ENCODE measurements at regions of chr5 and their contacts with region 1.

Region 1: GRCh38 chr5:142881076-142881783 is 111.1 kb downstream of the ARHGAP26 start:
- DNase-seq: no peak
- H3K4me3 ChIP-seq: no peak overlapping the region
- H3K27ac ChIP-seq: no peak overlapping the region
- H3K4me1 ChIP-seq: peaks cover 0 to 44% of the 10 kb centered on the region in 2 donors
- H3K27me3 ChIP-seq: no peaks in the 10 kb centered on the region
- CTCF ChIP-seq: no peak
- POLR2A ChIP-seq: no peak

Region 2: GRCh38 chr5:142716963-142717362 is 164.3 kb before region 1 on chr5:
- intact Hi-C with region 1: loop called (anchors 5 kb)
- DNase-seq: peak; percentile 83 to 86
- H3K4me3 ChIP-seq: no peak overlapping the region
- H3K27ac ChIP-seq: no peak overlapping the region
- H3K4me1 ChIP-seq: peaks cover 7 to 15% of the 10 kb centered on the region in 2 donors
- H3K27me3 ChIP-seq: no peaks in the 10 kb centered on the region
- CTCF ChIP-seq: peak; percentile 25 to 65 (median 52)
- POLR2A ChIP-seq: no peak

Region 3: GRCh38 chr5:142740474-142741242 is 140.6 kb before region 1 on chr5:
- intact Hi-C with region 1: no loop called
- DNase-seq: no peak
- H3K4me3 ChIP-seq: no peak overlapping the region
- H3K27ac ChIP-seq: no peak overlapping the region
- H3K4me1 ChIP-seq: no peaks in the 10 kb centered on the region
- H3K27me3 ChIP-seq: no peaks in the 10 kb centered on the region
- CTCF ChIP-seq: no peak
- POLR2A ChIP-seq: no peak

Region 4: DNA sequence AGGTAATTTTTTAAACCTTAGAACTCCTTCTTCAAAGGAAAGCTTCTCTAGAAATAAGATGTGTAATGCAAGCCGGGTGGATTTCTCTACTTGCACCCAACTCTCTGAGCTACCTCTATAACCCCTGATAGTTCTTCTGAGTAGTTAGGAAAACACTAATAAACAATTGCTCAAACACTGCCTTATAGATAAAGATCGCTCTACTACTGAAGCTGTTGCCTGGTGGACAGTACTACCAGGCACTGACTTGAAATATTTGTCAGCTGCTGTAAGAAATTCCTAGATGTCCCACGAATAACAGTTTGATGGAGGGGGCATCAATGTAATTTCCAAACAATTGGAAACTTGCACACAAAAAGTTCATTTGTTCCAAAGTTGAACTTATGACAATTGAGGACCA is 480.2 kb after region 1 on chr5:
- intact Hi-C with region 1: no loop called
- DNase-seq: no peak
- H3K4me3 ChIP-seq: no peak overlapping the region
- H3K27ac ChIP-seq: no peak overlapping the region
- H3K4me1 ChIP-seq: peaks cover 16 to 21% of the 10 kb centered on the region in 2 donors
- H3K27me3 ChIP-seq: no peaks in the 10 kb centered on the region
- CTCF ChIP-seq: no peak
- POLR2A ChIP-seq: no peak